ENCODE measurements at regions of chr1 and their contacts with region 1.

Region 1: DNA sequence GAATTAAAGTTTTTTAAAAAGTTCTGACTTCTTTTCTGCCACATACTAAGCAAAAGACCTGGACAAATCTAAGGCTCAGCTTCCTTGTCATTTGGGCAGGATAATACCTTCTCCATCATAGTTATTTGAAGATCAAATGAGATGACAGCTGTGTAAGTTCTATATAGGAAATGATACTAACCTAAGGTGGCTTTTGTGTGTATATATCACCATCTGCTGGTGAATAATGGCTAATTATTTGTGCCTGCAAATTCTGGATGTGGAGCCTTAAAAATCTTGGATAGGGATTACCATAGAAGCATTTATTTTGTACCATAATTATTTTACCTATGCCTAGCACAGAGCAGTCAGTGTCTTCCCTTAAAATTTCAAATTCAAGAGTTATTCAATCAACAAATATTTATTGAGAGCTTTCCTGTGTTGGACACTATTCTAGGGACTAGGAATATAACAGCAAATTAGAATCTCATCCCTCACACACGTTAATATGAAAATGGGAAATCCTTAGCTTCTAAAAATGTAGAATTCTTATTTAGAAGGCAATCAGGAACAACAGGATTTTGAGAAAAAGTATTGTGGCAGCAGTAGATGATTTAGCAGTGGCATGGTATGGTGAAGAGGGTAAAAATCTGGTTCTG is 89.8 kb downstream of the TMEM200B start:
- H3K4me3 Mint-ChIP-seq: no peak overlapping the region
- H3K27ac Mint-ChIP-seq: no peak overlapping the region
- H3K4me1 Mint-ChIP-seq: no peaks in the 10 kb centered on the region
- H3K27me3 Mint-ChIP-seq: no peaks in the 10 kb centered on the region

Region 2: GRCh38 chr1:28789412-28789811 is 244.5 kb before region 1 on chr1:
- intact Hi-C with region 1: loop called (anchors 5 kb)
- H3K4me3 Mint-ChIP-seq: no peak overlapping the region
- H3K27ac Mint-ChIP-seq: no peak overlapping the region
- H3K4me1 Mint-ChIP-seq: peaks cover 11% of the 10 kb centered on the region
- H3K27me3 Mint-ChIP-seq: peaks cover 4% of the 10 kb centered on the region

Region 3: GRCh38 chr1:28933277-28933676 is 100.7 kb before region 1 on chr1:
- intact Hi-C with region 1: no loop called
- H3K4me3 Mint-ChIP-seq: no peak overlapping the region
- H3K27ac Mint-ChIP-seq: no peak overlapping the region
- H3K4me1 Mint-ChIP-seq: peaks cover 5% of the 10 kb centered on the region
- H3K27me3 Mint-ChIP-seq: no peaks in the 10 kb centered on the region

Region 4: GRCh38 chr1:29202584-29203340 is 168.8 kb after region 1 on chr1:
- intact Hi-C with region 1: loop called (anchors 2 kb)
- H3K4me3 Mint-ChIP-seq: no peak overlapping the region
- H3K27ac Mint-ChIP-seq: peak overlapping the region; percentile 90
- H3K4me1 Mint-ChIP-seq: peaks cover 24% of the 10 kb centered on the region
- H3K27me3 Mint-ChIP-seq: no peaks in the 10 kb centered on the region

Measured in dendritic cell treated with granulocyte-macrophage colony-stimulating factor and Interleukin-4, amounts not matched to agents 40 ng/mL and 50 ng/mL, for 4 days (primary cell).